Activated CD4-positive, alpha-beta T cell treated with anti-CD3 and anti-CD28 coated beads, Interleukin-2, amount 10 ng/mL, durations not matched to agents 24 days and 14 days (primary cell): ENCODE measurements at regions of chr16 and their contacts with region 1.

Region 1: GRCh38 chr16:2194852-2195321 is 1.5 kb downstream of the CASKIN1 start:
- DNase-seq: peak; percentile 83
- H3K4me3 Mint-ChIP-seq: peak overlapping the region; percentile 42
- H3K27ac Mint-ChIP-seq: no peak overlapping the region
- H3K4me1 Mint-ChIP-seq: peaks cover 2% of the 10 kb centered on the region
- H3K27me3 Mint-ChIP-seq: peaks cover 34% of the 10 kb centered on the region

Region 2: DNA sequence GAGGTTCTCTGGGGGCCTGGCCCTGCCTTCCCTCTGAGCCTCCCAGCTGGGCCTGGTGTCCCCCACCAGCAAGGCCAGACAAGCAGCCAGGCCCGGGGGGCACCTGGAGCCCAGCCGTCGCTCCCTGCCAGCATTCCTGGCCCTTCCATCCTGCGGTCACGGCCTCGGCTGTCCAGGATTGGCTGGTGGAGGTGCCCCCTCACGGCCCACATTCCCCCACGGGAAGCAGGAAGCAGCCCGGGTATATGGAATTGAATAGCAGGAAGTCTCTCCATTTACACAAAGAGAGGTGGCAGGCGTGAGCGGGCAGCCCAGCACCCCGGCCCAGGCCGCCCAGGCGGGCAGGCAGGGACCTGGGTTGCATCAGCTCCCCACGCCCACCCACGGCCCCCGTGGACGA is 24.8 kb before region 1 on chr16:
- intact Hi-C with region 1: no loop called
- DNase-seq: no peak
- H3K4me3 Mint-ChIP-seq: no peak overlapping the region
- H3K27ac Mint-ChIP-seq: no peak overlapping the region
- H3K4me1 Mint-ChIP-seq: peaks cover 2% of the 10 kb centered on the region
- H3K27me3 Mint-ChIP-seq: no peaks in the 10 kb centered on the region

Region 3: DNA sequence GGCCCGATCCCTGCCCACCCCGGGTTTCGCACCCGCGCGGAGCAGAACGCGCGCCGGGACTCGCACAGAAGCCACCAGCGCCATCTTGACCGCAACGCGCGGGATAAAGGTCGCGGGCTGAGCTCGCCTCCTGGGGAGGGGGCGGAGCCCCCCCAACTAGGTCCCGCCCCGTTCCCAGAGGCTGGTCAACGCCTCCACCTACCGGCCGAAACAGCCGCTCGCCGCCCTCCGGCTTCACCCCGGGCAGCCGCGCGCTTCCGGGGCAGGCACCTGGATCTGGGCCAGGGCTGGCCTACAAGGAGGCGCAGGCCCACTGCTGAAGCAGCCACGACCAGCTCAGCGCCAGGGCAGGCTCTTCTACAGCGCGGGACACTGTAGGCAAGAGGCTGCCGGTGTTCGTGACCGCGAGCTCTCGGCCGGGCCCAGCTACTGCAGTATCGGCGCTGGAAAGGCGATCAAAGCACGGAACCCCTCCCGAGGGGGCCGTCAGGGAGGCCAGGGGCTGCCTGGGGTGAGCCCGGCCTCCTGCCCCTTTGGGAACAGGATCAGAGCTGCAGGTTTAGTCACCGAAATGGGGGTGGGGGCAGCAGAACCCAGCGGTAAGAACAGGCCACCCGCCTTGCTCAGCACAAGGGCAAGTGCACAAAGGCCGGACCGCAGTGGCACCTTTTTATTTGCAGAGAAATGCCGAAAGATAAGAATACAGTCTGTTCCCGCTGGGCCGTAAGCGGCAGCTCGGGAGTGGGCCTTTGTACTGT is 56.8 kb after region 1 on chr16 and contains the start of gene ECI1:
- intact Hi-C with region 1: loop called (anchors 2 kb)
- DNase-seq: peak; percentile 95
- H3K4me3 Mint-ChIP-seq: peak within 1 kb of the TSS; percentile 93
- H3K27ac Mint-ChIP-seq: peak within 1 kb of the TSS; percentile 90
- H3K4me1 Mint-ChIP-seq: peaks cover 6% of the 10 kb centered on the region
- H3K27me3 Mint-ChIP-seq: no peaks in the 10 kb centered on the region
- total RNA-seq, gene ECI1: 34.1 and 38.7 TPM in 2 replicates